ENCODE measurements at regions of chr1 and their contacts with region 1.

Region 1: DNA sequence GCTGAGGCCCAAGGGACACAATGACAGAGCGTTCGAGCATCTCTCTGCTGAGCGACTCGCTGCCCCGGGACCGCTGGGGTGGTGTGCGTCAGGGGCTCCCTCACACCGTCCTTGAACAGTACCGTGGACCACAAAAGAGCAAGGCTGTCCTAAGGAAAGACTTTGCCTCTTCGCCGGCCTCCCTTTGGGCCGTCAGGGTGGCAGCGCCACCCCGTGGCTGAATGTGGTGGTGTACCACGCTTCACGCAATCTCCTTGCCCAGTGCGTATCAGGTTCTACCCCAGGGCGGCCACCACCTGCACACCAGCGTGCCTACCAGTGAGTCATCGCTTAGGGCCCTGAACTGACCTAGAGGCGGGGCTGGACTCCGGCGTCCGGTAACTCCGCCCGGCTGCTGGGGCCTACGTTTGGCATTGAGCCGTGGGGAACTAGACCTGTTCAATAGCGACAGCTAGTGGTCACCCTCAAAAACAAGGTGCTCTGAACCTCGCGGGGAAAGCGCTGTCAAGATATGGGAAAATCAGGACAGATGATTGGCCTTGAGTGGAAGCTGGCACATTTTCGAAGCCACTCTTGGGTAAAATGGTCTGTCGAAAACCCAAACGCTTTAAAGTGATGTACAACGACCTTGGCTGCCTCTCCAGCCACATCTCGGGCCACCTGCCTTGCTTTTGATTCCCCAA is 8.1 kb upstream of the TRAF3IP3 start:
- DNase-seq: peak; percentile 93
- ATAC-seq: peak; percentile 74
- H3K4me3 Mint-ChIP-seq: peak overlapping the region; percentile 65
- H3K27ac Mint-ChIP-seq: peak overlapping the region; percentile 92
- H3K4me1 Mint-ChIP-seq: peaks cover 70% of the 10 kb centered on the region
- H3K27me3 Mint-ChIP-seq: no peaks in the 10 kb centered on the region

Region 2: GRCh38 chr1:209576798-209577197 is 170.9 kb before region 1 on chr1:
- CTCF ChIA-PET with region 1: interaction called, 5 read pairs
- POLR2A ChIA-PET with region 1: no interaction called
- intact Hi-C with region 1: loop called (anchors 1 to 2 kb)
- DNase-seq: peak; percentile 84
- ATAC-seq: peak; percentile 98
- H3K4me3 Mint-ChIP-seq: no peak overlapping the region
- H3K27ac Mint-ChIP-seq: no peak overlapping the region
- H3K4me1 Mint-ChIP-seq: no peaks in the 10 kb centered on the region
- H3K27me3 Mint-ChIP-seq: peaks cover 7% of the 10 kb centered on the region

Region 3: DNA sequence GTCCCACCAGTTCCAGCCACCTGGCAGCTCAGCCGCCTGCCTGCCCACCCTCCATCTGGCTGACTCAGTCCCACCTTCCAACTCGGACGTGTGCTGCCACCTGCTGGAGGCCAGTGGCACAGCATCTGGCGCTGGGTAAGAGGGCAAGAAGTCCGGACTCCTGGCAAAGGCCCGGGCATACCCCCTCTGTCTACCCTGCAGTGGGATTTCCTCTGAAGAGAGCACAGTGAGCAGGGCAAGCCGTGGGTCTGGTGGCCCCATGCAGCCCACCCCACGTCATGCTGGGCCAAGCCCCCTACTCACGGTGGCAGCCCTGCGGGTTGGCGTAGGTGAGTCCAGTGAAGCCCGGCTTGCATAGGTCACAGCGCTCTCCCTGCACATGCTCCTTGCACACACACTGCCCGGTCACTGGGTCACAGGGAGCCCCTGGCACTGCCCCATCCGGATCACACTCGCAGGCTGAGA is 120.0 kb before region 1 on chr1:
- CTCF ChIA-PET with region 1: interaction called, 6 read pairs
- POLR2A ChIA-PET with region 1: no interaction called
- intact Hi-C with region 1: loop called in 1 of 2 experiments (anchors 1 kb)
- DNase-seq: peak; percentile 89
- ATAC-seq: peak; percentile 91
- H3K4me3 Mint-ChIP-seq: no peak overlapping the region
- H3K27ac Mint-ChIP-seq: no peak overlapping the region
- H3K4me1 Mint-ChIP-seq: peaks cover 8% of the 10 kb centered on the region
- H3K27me3 Mint-ChIP-seq: no peaks in the 10 kb centered on the region

Region 4: DNA sequence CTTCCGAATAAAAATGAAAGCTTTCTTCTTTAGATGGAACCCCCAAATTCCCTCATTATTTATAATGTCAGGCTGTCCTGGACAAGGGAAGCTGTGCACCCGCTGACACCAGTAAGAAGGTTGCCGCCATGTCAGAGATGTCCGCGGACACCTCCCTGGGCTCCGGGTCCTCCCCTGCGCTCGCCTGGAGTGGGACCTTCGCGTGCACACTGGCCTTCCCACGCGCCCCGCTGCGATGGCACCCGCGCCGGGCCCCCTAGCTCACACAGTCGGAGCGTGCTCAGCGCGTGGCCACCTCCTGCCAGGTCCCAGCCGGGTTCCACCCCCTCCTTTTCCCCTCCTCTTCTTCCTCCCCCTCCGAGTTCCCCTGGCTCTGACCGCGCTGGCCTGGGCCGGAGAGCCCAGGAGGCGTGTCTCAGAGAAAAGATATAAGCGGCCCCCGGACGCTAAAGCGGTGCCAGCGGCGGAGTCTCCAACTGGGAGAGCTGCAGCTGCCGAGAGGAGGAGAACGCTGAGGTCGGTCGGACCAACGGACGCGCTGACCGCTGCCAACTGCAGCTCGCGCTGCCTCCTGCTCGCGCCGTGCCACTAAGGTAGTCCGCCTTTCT is 72.7 kb before region 1 on chr1 and contains the start of gene G0S2:
- CTCF ChIA-PET with region 1: interaction called, 7 read pairs
- POLR2A ChIA-PET with region 1: no interaction called
- intact Hi-C with region 1: loop called (anchors 2 to 5 kb)
- DNase-seq: peak; percentile 70
- ATAC-seq: peak; percentile 31
- H3K4me3 Mint-ChIP-seq: peak within 1 kb of the TSS; percentile 71
- H3K27ac Mint-ChIP-seq: peak within 1 kb of the TSS; percentile 84
- H3K4me1 Mint-ChIP-seq: peaks cover 56% of the 10 kb centered on the region
- H3K27me3 Mint-ChIP-seq: peaks cover 38% of the 10 kb centered on the region
- total RNA-seq, gene G0S2: 21.9 to 22.8 TPM

Region 5: GRCh38 chr1:209710093-209710492 is 37.6 kb before region 1 on chr1:
- CTCF ChIA-PET with region 1: interaction called, 6 read pairs
- POLR2A ChIA-PET with region 1: no interaction called
- intact Hi-C with region 1: loop called in 1 of 2 experiments (anchors 5 kb)
- DNase-seq: peak; percentile 26
- ATAC-seq: peak; percentile 74
- H3K4me3 Mint-ChIP-seq: peak overlapping the region; percentile 49
- H3K27ac Mint-ChIP-seq: peak overlapping the region; percentile 76
- H3K4me1 Mint-ChIP-seq: peaks cover 40% of the 10 kb centered on the region
- H3K27me3 Mint-ChIP-seq: no peaks in the 10 kb centered on the region

Region 6: GRCh38 chr1:209736490-209737117 is 11.1 kb before region 1 on chr1:
- CTCF ChIA-PET with region 1: interaction called, 29 read pairs
- POLR2A ChIA-PET with region 1: interaction called, 5 read pairs
- intact Hi-C with region 1: no loop called
- DNase-seq: no peak
- ATAC-seq: peak; percentile 79
- H3K4me3 Mint-ChIP-seq: no peak overlapping the region
- H3K27ac Mint-ChIP-seq: peak overlapping the region; percentile 12
- H3K4me1 Mint-ChIP-seq: peaks cover 46% of the 10 kb centered on the region
- H3K27me3 Mint-ChIP-seq: no peaks in the 10 kb centered on the region

Region 7: GRCh38 chr1:209784265-209785169 is 36.8 kb after region 1 on chr1 and contains the start of gene C1orf74:
- CTCF ChIA-PET with region 1: interaction called, 3 read pairs
- POLR2A ChIA-PET with region 1: interaction called, 5 read pairs
- intact Hi-C with region 1: loop called (anchors 1 kb)
- DNase-seq: peak; percentile 100
- ATAC-seq: peak; percentile 99
- H3K4me3 Mint-ChIP-seq: peak within 1 kb of the TSS; percentile 89
- H3K27ac Mint-ChIP-seq: peak within 1 kb of the TSS; percentile 97
- H3K4me1 Mint-ChIP-seq: peaks cover 30% of the 10 kb centered on the region
- H3K27me3 Mint-ChIP-seq: no peaks in the 10 kb centered on the region
- total RNA-seq, gene C1orf74: 3.7 to 4.3 TPM

Region 8: GRCh38 chr1:210049616-210050015 is 301.9 kb after region 1 on chr1:
- CTCF ChIA-PET with region 1: no interaction called
- POLR2A ChIA-PET with region 1: no interaction called
- intact Hi-C with region 1: no loop called
- DNase-seq: no peak
- ATAC-seq: no peak
- H3K4me3 Mint-ChIP-seq: no peak overlapping the region
- H3K27ac Mint-ChIP-seq: no peak overlapping the region
- H3K4me1 Mint-ChIP-seq: no peaks in the 10 kb centered on the region
- H3K27me3 Mint-ChIP-seq: no peaks in the 10 kb centered on the region